Stomach (tissue), 19 donors: ENCODE measurements at regions of chr22 and their contacts with region 1.

Region 1: GRCh38 chr22:50150149-50151129 is 20.1 kb upstream of the PANX2 start:
- DNase-seq: no peak
- H3K4me3 ChIP-seq: no peak overlapping the region
- H3K27ac ChIP-seq: no peak overlapping the region
- H3K4me1 ChIP-seq: peaks cover 0 to 7% (median 4%) of the 10 kb centered on the region in 4 donors
- H3K27me3 ChIP-seq: peaks cover 0 to 8% (median 7%) of the 10 kb centered on the region in 3 donors
- CTCF ChIP-seq: no peak
- EP300 ChIP-seq: no peak
- POLR2A ChIP-seq: no peak

Region 2: DNA sequence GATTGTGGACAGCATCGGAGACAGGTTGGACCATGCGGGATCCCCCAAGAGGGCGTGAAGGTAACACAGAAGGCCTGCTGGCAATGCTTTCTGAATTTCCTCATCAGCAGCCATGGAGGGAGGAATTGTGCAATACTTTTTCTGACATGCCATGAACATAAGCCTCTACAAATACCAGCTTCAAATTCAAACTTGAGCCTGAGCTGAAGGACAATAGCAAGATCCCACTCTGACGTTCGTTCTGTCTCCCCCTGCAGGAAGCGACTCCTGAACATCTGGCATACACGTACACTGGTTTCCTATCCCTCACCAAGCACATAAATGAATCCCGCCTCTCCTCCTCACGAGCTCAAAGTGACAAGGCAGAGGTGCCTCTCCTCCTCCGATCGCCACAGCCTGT is 635.0 kb before region 1 on chr22:
- intact Hi-C with region 1: no loop called
- DNase-seq: peak in 1 of 2 donors; percentile 37
- H3K4me3 ChIP-seq: no peak overlapping the region
- H3K27ac ChIP-seq: no peak overlapping the region
- H3K4me1 ChIP-seq: no peaks in the 10 kb centered on the region
- H3K27me3 ChIP-seq: peaks cover 0 to 38% (median 0%) of the 10 kb centered on the region in 3 donors
- CTCF ChIP-seq: no peak
- EP300 ChIP-seq: no peak
- POLR2A ChIP-seq: no peak

Region 3: GRCh38 chr22:50209893-50210292 is 59.5 kb after region 1 on chr22:
- intact Hi-C with region 1: loop called (anchors 5 kb)
- DNase-seq: peak; percentile 79 to 87
- H3K4me3 ChIP-seq: no peak overlapping the region
- H3K27ac ChIP-seq: no peak overlapping the region
- H3K4me1 ChIP-seq: peaks cover 0 to 41% (median 24%) of the 10 kb centered on the region in 4 donors
- H3K27me3 ChIP-seq: no peaks in the 10 kb centered on the region
- CTCF ChIP-seq: peak in 5 of 7 experiments; percentile 63 to 91 (median 84)
- EP300 ChIP-seq: no peak
- POLR2A ChIP-seq: no peak